ENCODE measurements at regions of chr2 and their contacts with region 1.

Region 1: GRCh38 chr2:121071034-121071504 is 213.9 kb downstream of the TFCP2L1 start:
- DNase-seq: peak; percentile 64 to 76
- H3K4me3 ChIP-seq: no peak overlapping the region
- H3K27ac ChIP-seq: no peak overlapping the region
- H3K4me1 ChIP-seq: no peaks in the 10 kb centered on the region
- H3K27me3 ChIP-seq: no peaks in the 10 kb centered on the region
- CTCF ChIP-seq: peak; percentile 78 to 94 (median 89)
- POLR2A ChIP-seq: no peak

Region 2: DNA sequence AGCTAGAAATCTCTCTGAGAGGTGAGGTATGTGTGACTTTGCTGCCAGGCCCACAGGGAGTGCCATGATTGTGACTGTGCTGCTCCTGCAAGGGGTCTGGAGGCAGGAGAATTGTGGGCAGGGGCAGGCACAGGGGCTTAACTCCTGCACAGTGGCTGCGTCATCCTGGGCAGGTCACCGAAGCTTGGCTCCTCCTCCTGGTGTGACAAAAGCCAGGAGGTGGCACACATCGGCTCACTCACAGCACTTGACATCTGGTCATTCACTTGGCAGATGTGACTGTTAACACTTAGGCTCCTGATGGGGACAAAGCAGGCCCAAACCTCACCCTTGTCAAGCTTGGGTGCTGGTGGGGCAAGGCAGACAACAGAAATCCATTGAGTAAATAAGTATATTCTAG is 371.8 kb before region 1 on chr2:
- intact Hi-C with region 1: loop called (anchors 5 kb)
- DNase-seq: no peak
- H3K4me3 ChIP-seq: no peak overlapping the region
- H3K27ac ChIP-seq: no peak overlapping the region
- H3K4me1 ChIP-seq: no peaks in the 10 kb centered on the region
- H3K27me3 ChIP-seq: no peaks in the 10 kb centered on the region
- CTCF ChIP-seq: no peak
- POLR2A ChIP-seq: no peak

Region 3: GRCh38 chr2:120735746-120736170 is 335.3 kb before region 1 on chr2 and contains the start of gene GLI2:
- intact Hi-C with region 1: no loop called
- DNase-seq: peak; percentile 79 to 81
- H3K4me3 ChIP-seq: peak within 1 kb of the TSS; percentile 44 to 66
- H3K27ac ChIP-seq: peak within 1 kb of the TSS; percentile 83
- H3K4me1 ChIP-seq: peaks cover 0 to 4% of the 10 kb centered on the region in 2 donors
- H3K27me3 ChIP-seq: no peaks in the 10 kb centered on the region
- CTCF ChIP-seq: peak; percentile 48 to 86 (median 68)
- POLR2A ChIP-seq: peak in 1 of 2 donors; percentile 30
- total RNA-seq, gene GLI2: 2.9 to 23.6 (median 12.9) TPM